Dendritic cell treated with granulocyte-macrophage colony-stimulating factor and Interleukin-4, amounts not matched to agents 40 ng/mL and 50 ng/mL, for 4 days (primary cell): ENCODE measurements at regions of chr10 and their contacts with region 1.

Region 1: DNA sequence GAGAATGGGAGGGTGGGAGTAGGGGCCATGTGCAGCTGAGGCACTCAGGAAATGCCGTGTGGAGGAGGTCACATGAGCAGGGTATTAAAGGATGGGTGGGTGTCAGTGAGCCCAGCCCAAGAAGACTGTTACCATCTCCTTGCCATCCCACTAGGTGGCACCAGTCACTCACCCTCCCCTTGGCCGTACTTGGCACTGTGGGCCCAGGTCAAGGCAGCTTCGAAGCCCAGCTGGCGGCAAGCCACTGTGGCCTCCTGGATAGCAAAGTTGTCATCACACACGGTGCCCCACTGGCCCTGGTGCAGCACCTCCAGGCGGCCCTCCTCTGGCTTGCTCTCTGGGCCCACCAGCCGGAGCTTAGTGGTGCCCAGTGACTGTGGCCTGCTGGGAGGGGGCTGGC is 5.4 kb downstream of the LOXL4 start:
- H3K4me3 Mint-ChIP-seq: no peak overlapping the region
- H3K27ac Mint-ChIP-seq: no peak overlapping the region
- H3K4me1 Mint-ChIP-seq: peaks cover 30% of the 10 kb centered on the region
- H3K27me3 Mint-ChIP-seq: peaks cover 22% of the 10 kb centered on the region

Region 2: GRCh38 chr10:98242823-98243222 is 19.7 kb before region 1 on chr10:
- intact Hi-C with region 1: no loop called
- H3K4me3 Mint-ChIP-seq: no peak overlapping the region
- H3K27ac Mint-ChIP-seq: no peak overlapping the region
- H3K4me1 Mint-ChIP-seq: no peaks in the 10 kb centered on the region
- H3K27me3 Mint-ChIP-seq: no peaks in the 10 kb centered on the region

Region 3: GRCh38 chr10:98309366-98310355 is 47.1 kb after region 1 on chr10:
- intact Hi-C with region 1: loop called (anchors 2 kb)
- H3K4me3 Mint-ChIP-seq: no peak overlapping the region
- H3K27ac Mint-ChIP-seq: no peak overlapping the region
- H3K4me1 Mint-ChIP-seq: peaks cover 32% of the 10 kb centered on the region
- H3K27me3 Mint-ChIP-seq: peaks cover 28% of the 10 kb centered on the region

Region 4: DNA sequence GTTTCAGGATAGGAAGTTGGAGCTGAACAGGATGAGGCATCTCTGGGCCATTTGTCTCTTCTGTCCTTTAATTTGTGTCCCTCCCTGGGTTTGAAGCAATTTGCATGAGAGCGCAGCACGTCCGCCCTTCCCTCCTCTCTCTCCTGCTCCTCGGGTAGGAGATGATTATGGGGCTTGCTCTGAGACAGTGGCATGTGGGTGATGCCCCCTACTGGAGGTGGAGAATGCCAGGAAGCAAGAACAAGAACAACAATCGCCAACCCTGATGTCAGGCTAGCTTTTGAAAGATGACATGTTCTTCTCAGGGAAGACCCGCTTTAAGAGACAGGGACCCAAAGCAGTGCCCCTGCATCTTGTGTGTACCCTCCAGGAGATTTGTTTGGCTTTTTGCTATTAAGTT is 69.3 kb after region 1 on chr10:
- intact Hi-C with region 1: loop called (anchors 1 kb)
- H3K4me3 Mint-ChIP-seq: no peak overlapping the region
- H3K27ac Mint-ChIP-seq: no peak overlapping the region
- H3K4me1 Mint-ChIP-seq: peaks cover 17% of the 10 kb centered on the region
- H3K27me3 Mint-ChIP-seq: peaks cover 16% of the 10 kb centered on the region

Region 5: DNA sequence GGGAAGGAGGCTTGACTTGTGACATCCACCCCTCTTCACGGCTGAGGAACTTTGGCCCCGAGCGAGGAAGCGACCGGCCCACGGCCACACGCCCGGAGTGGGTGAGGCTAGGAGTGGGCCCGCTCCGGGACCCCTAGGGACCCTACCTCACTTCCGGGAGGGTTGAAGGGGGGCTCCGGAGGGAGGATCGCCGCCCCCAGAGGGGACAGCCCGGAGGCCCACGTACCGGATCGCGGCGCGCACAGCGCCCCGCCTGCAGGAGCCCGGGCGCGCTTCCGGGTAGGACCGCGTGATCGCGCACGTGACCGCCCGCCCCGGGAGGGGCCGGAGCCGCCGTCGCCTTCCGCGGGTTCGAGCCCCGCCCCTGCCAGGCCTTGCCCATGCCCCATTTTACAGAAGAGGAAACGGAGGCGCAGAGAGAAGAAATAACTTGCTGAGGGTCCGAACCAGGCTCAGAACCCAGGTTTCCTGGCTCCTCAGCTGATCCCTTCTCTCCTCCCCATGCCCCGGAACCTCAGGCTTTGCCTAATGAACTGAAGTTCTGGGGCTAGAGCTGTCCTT is 184.2 kb after region 1 on chr10 and contains the start of gene HPS1:
- intact Hi-C with region 1: loop called (anchors 10 kb)
- H3K4me3 Mint-ChIP-seq: peak within 1 kb of the TSS; percentile 93
- H3K27ac Mint-ChIP-seq: peak within 1 kb of the TSS; percentile 85
- H3K4me1 Mint-ChIP-seq: peaks cover 60% of the 10 kb centered on the region
- H3K27me3 Mint-ChIP-seq: peaks cover 10% of the 10 kb centered on the region

Region 6: DNA sequence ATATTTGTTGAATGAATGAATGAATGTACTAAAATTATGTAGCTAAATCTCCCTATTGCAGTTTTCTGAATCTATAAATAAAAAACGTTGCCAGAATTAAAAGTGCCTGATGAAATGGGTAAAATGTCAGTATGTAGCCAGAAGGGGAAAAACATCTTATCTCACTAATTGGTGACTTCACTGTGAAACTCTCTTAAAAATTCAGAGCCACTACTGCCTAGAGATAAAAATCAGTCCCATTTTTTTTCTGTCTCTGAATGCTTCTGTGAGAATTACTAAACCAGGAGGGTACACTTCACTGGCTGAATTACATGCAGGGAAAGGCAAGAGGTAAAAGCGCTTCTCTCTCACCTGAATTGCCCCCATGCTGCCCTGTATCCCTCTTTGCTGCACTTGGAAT is 253.8 kb after region 1 on chr10:
- intact Hi-C with region 1: no loop called
- H3K4me3 Mint-ChIP-seq: no peak overlapping the region
- H3K27ac Mint-ChIP-seq: no peak overlapping the region
- H3K4me1 Mint-ChIP-seq: no peaks in the 10 kb centered on the region
- H3K27me3 Mint-ChIP-seq: peaks cover 8% of the 10 kb centered on the region